Caco-2 (cell line): ENCODE measurements at regions of chr1 and their contacts with region 1.

Region 1: DNA sequence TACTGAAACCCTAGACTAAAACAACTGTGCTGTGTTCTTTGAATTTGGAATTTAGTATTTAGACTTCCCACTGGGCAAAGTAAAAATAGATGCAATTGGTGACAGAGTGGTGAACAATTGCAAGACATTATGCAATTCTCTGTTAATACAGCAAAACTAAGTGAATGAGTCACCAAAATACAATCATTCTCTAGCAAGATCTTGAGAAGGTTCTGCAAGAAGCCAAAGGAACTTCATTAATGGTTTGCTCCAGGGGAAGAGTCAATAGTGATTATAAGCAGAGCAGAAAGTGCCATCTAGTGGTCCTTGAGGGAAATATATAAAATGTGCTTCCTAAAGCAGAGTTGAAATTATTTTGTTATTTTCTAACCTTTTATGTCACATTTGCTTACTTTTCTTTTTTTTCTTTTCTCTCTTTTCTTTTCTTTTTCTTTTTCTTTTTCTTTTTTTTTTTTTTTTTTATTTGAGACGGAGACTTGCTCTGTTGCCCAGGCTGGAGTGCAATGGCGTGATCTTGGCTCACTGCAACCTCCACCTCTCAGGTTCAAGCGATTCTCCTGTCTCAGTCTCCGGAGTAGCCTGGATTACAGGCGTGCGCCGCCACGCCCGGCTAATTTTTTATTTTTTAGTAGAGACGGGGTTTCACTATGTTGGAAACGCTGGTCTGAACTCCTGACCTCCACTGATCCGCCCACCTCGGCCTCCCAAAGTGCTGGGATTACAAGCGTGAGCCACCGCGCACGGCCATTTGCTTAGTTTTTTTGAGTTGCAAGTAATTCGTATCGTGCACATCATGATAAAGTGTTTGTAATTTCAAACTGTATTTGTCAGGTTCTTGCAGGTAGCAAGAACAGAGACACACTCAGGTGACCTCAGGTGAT is 99.2 kb downstream of the CTH start:
- DNase-seq: peak in 1 of 2 experiments; percentile 25
- H3K4me3 ChIP-seq: no peak overlapping the region
- H3K4me3 Mint-ChIP-seq: no peak overlapping the region
- H3K27ac Mint-ChIP-seq: no peak overlapping the region
- H3K4me1 ChIP-seq: 0 out of 2 replicates have a peak, but pooled peaks cover 3% of the 10 kb centered on the region
- H3K4me1 Mint-ChIP-seq: no peaks in the 10 kb centered on the region
- H3K27me3 ChIP-seq: no peaks in the 10 kb centered on the region
- H3K27me3 Mint-ChIP-seq: no peaks in the 10 kb centered on the region
- CTCF ChIP-seq: peak; percentile 26 to 49

Region 2: GRCh38 chr1:70134148-70134547 is 376.1 kb before region 1 on chr1:
- CTCF ChIA-PET with region 1: no interaction called
- POLR2A ChIA-PET with region 1: no interaction called
- intact Hi-C with region 1: loop called (anchors 1 kb)
- DNase-seq: no peak
- H3K4me3 ChIP-seq: no peak overlapping the region
- H3K4me3 Mint-ChIP-seq: no peak overlapping the region
- H3K27ac Mint-ChIP-seq: no peak overlapping the region
- H3K4me1 ChIP-seq: no peaks in the 10 kb centered on the region
- H3K4me1 Mint-ChIP-seq: no peaks in the 10 kb centered on the region
- H3K27me3 ChIP-seq: no peaks in the 10 kb centered on the region
- H3K27me3 Mint-ChIP-seq: no peaks in the 10 kb centered on the region
- CTCF ChIP-seq: no peak

Region 3: DNA sequence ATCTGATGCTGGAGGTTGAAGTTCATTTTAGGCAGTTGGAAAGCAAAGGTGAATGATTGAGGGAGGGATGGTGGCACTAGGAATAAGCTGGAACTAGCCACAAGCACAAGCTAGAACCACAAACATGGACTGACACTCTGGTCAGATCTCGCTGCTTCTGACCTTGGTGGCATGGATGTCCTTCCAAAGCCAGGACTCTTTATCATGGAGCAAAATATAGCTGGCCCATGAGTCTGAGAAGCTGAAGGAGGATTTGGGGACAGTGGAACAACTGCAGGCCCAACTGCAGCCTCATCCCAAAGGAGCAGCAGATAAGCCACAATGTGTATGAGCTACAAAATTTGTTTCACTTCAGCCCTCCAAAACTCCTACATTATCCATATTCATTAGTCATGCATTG is 253.6 kb before region 1 on chr1:
- CTCF ChIA-PET with region 1: no interaction called
- POLR2A ChIA-PET with region 1: no interaction called
- intact Hi-C with region 1: loop called (anchors 10 kb)
- DNase-seq: no peak
- H3K4me3 ChIP-seq: no peak overlapping the region
- H3K4me3 Mint-ChIP-seq: no peak overlapping the region
- H3K27ac Mint-ChIP-seq: no peak overlapping the region
- H3K4me1 ChIP-seq: no peaks in the 10 kb centered on the region
- H3K4me1 Mint-ChIP-seq: no peaks in the 10 kb centered on the region
- H3K27me3 ChIP-seq: no peaks in the 10 kb centered on the region
- H3K27me3 Mint-ChIP-seq: no peaks in the 10 kb centered on the region
- CTCF ChIP-seq: no peak

Region 4: DNA sequence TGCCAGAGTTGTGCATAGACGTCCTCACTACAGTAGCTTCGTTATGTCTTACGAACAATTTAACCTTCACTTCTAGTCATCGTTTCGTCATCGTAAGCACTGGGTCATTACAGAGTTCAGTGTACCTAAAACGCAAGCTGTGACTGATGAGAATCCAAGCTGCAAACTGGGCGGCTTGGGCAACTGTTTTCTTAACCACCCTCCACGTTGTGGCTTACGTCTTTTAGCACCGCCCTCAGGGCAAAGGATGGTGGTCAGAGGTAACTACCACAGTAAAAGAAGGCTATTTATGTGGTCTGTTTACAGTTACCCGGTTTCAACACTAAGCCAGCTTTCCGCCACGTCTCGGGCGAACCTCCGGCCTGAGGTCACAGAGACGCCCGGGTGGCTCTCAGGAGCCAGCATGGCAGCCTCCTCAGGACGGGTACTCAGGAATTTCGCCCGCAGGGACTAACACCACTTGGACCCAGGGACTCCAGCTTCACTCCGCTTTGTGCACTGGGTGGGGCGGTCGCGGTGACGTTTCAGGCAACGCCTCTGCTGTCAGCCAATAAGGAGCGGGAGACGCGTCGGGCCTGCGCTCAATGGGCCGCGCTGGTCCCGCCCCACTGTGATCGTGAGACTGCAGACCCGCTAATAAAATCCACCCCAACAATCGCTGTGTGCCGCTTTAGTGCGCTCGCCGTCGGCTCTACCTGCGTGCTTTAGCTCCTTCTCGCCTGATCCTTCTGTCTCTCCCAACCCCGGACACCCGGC is 99.5 kb before region 1 on chr1 and contains the start of gene CTH:
- CTCF ChIA-PET with region 1: no interaction called
- POLR2A ChIA-PET with region 1: no interaction called
- intact Hi-C with region 1: no loop called
- DNase-seq: peak; percentile 93 to 95
- H3K4me3 ChIP-seq: peak within 1 kb of the TSS; percentile 70
- H3K4me3 Mint-ChIP-seq: peak within 1 kb of the TSS; percentile 93
- H3K27ac Mint-ChIP-seq: peak within 1 kb of the TSS; percentile 92
- H3K4me1 ChIP-seq: no peaks in the 10 kb centered on the region
- H3K4me1 Mint-ChIP-seq: no peaks in the 10 kb centered on the region
- H3K27me3 ChIP-seq: no peaks in the 10 kb centered on the region
- H3K27me3 Mint-ChIP-seq: no peaks in the 10 kb centered on the region
- CTCF ChIP-seq: no peak
- total RNA-seq, gene CTH: 11.1 and 14.0 TPM in 2 replicates